ENCODE measurements at regions of chr12 and their contacts with region 1.

Region 1: GRCh38 chr12:12716793-12717585 is at the start of gene CDKN1B:
- DNase-seq: peak; percentile 76 to 92
- ATAC-seq: peak; percentile 68 to 85 (median 78)
- H3K4me3 ChIP-seq: peak within 1 kb of the TSS; percentile 100
- H3K4me3 Mint-ChIP-seq: peak within 1 kb of the TSS; percentile 98
- H3K27ac ChIP-seq: peak within 1 kb of the TSS; percentile 99
- H3K27ac Mint-ChIP-seq: peak within 1 kb of the TSS; percentile 99 to 100
- H3K4me1 ChIP-seq: peaks cover 41% of the 10 kb centered on the region
- H3K4me1 Mint-ChIP-seq: peaks cover 78 to 80% of the 10 kb centered on the region in 2 donors
- H3K27me3 ChIP-seq: no peaks in the 10 kb centered on the region
- H3K27me3 Mint-ChIP-seq: no peaks in the 10 kb centered on the region
- CTCF ChIP-seq: no peak
- total RNA-seq, gene CDKN1B: 119 to 207 (median 130) TPM

Region 2: DNA sequence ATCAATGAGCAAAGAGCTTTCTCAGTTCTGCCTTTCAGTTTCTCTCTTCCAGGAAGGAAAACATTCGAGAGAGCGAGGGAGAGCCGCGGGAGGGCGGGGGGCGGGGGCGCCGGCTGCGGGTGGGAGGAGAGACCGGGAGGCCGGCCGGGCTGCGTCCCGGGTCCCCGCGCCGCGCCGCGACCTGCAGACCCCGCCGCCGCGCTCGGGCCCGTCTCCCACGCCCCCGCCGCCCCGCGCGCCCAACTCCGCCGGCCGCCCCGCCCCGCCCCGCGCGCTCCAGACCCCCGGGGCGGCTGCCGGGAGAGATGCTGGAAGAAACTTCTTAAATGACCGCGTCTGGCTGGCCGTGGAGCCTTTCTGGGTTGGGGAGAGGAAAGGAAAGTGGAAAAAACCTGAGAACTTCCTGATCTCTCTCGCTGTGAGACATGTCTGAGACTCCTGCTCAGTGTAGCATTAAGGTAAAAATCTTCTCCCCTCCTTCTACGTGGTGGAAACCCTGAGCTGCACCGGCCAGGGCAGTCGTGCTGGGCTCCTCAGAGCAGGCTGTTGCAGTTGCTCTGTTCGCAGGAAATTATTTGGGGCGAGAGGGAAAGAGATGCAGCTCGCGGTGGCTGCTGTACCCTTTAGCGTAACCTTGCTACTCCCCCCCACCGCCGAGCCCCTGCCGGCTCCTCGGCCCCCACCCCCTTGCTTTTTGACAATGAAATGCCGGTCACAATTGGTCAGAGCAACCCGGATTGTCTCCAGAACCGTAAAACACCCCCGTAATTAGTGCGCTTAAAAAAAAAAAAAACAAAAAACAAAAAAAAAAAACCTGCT is 1067.1 kb before region 1 on chr12:
- intact Hi-C with region 1: loop called (anchors 10 kb)
- DNase-seq: peak; percentile 26 to 65
- ATAC-seq: peak; percentile 25 to 59 (median 52)
- H3K4me3 ChIP-seq: peak overlapping the region; percentile 97
- H3K4me3 Mint-ChIP-seq: peak overlapping the region; percentile 98
- H3K27ac ChIP-seq: peak overlapping the region; percentile 91
- H3K27ac Mint-ChIP-seq: peak overlapping the region; percentile 88 to 95
- H3K4me1 ChIP-seq: peaks cover 31% of the 10 kb centered on the region
- H3K4me1 Mint-ChIP-seq: peaks cover 38 to 46% of the 10 kb centered on the region in 2 donors
- H3K27me3 ChIP-seq: no peaks in the 10 kb centered on the region
- H3K27me3 Mint-ChIP-seq: no peaks in the 10 kb centered on the region
- CTCF ChIP-seq: no peak

Region 3: DNA sequence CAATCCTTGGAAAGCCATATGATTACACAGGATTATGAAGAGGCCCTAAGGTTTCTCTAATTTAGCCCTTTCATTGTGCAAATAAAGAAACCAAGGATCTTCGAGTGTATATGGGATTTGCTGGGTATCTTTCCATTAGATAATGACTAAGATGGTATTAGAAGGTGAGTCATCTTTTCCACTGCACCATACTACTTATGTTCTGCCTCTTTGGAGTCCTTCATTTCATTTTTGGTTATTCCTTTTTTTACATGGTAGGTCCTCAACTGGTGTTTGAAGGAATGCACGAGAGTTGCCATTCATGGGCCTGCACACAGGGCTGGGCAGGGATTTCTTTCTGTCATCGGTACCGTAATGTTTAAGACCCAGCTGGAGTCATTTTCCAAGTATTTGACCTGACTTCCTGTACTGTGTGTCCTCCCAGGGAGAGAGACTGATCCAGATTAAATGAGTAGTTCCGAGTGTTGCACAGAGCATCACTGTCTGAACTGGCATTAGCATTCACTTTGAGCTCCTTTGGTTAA is 274.4 kb before region 1 on chr12:
- intact Hi-C with region 1: loop called (anchors 2 kb)
- DNase-seq: peak in 1 of 2 donors; percentile 55
- ATAC-seq: peak in 1 of 3 donors; percentile 13
- H3K4me3 ChIP-seq: no peak overlapping the region
- H3K4me3 Mint-ChIP-seq: peak overlapping the region; percentile 65
- H3K27ac ChIP-seq: peak overlapping the region; percentile 78
- H3K27ac Mint-ChIP-seq: peak overlapping the region; percentile 94 to 98
- H3K4me1 ChIP-seq: peaks cover 40% of the 10 kb centered on the region
- H3K4me1 Mint-ChIP-seq: peaks cover 49 to 55% of the 10 kb centered on the region in 2 donors
- H3K27me3 ChIP-seq: no peaks in the 10 kb centered on the region
- H3K27me3 Mint-ChIP-seq: no peaks in the 10 kb centered on the region
- CTCF ChIP-seq: no peak

Region 4: DNA sequence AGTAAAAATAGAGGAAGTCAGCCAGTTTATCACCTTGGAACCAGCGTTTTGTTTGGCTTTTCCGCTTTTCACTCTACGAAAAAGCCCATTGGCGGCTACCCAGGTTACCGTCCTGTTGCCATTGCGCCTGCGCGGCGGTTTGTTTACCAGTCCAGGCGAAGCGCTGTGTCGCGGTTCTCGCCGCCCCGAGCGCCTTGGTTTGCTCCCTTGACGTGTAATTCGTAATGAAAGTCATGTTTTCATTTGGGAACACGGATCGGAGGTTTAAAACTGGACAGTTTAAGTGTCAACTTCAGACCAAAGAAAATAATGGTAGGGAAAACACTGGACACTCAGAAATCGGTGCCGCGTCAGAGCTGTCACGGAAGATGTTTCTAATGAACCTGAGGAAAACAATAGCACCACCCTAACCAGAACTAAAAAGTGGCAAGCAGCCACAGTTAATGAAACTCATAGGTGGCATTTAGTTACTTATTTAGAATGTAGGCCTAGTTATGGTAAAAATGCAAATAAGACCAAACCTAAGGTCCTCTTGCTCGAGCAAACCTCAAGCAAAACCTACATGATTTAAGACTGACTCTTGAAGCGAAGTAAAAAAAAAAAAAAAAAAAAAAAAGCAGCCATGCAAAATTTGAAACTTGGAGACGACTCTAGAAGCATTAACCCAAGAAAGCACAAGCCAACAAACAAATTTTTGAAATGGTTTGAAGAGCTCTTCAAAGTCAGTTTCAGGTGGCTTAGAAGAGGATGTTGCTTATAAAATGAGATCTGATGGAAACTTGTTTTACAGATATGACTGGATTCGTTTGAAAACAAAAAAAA is 20.2 kb before region 1 on chr12:
- intact Hi-C with region 1: loop called (anchors 1 kb)
- DNase-seq: peak; percentile 91 to 97
- ATAC-seq: peak; percentile 85 to 93 (median 89)
- H3K4me3 ChIP-seq: peak overlapping the region; percentile 68
- H3K4me3 Mint-ChIP-seq: peak overlapping the region; percentile 93
- H3K27ac ChIP-seq: peak overlapping the region; percentile 98
- H3K27ac Mint-ChIP-seq: peak overlapping the region; percentile 99 to 100
- H3K4me1 ChIP-seq: no peaks in the 10 kb centered on the region
- H3K4me1 Mint-ChIP-seq: peaks cover 26 to 27% of the 10 kb centered on the region in 2 donors
- H3K27me3 ChIP-seq: no peaks in the 10 kb centered on the region
- H3K27me3 Mint-ChIP-seq: no peaks in the 10 kb centered on the region
- CTCF ChIP-seq: no peak

Region 5: GRCh38 chr12:13100882-13101769 is 384.1 kb after region 1 on chr12:
- intact Hi-C with region 1: loop called (anchors 5 kb)
- DNase-seq: peak; percentile 96 to 97
- ATAC-seq: peak; percentile 86 to 96 (median 91)
- H3K4me3 ChIP-seq: peak overlapping the region; percentile 50
- H3K4me3 Mint-ChIP-seq: peak overlapping the region; percentile 90
- H3K27ac ChIP-seq: peak overlapping the region; percentile 90
- H3K27ac Mint-ChIP-seq: peak overlapping the region; percentile 82 to 97
- H3K4me1 ChIP-seq: peaks cover 32% of the 10 kb centered on the region
- H3K4me1 Mint-ChIP-seq: peaks cover 40 to 45% of the 10 kb centered on the region in 2 donors
- H3K27me3 ChIP-seq: no peaks in the 10 kb centered on the region
- H3K27me3 Mint-ChIP-seq: peaks cover 0 to 5% of the 10 kb centered on the region in 2 donors
- CTCF ChIP-seq: no peak